Panc1 (cell line): ENCODE measurements at regions of chr10 and their contacts with region 1.

Region 1: DNA sequence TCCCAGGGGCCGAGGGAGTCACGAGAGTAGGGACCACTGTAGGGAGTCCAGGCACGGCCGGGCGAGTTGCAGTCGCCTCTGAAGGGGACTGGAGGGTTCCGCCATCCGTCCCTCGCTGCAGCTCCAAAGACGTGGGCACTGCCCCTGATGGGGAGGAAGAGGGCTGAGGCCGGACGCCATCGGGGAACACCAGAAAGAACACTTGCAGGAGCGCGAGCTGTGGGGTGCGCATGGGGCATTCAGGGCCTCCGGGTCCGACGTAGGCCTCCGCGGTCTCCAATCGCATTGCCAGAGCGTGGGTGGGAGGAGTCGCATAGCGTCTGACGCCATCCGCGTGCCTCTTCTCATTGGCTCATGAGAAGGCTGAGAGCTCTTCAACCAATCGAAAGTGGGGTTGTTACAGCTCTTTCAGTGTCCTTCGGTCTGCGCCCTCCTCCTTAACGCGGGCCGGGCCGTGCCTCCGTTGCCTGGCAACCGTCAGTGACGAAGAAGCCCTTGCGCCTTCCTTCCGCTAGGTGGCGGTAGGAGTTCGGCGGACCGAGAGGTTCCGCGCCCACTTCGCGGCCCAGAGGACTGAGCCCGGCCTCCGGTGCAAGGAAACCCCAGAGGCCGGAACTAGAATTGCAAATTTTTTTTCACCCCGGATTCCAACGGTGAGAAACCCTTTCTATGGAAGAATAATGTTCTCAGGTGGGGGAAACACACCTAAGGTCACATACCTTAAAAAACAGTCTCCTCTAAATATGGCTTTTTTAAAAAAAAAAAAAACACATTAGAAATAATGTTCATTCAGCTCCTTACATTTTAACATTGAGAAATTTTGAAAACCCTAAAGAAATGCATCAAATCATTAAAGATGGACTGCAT is at the start of gene TCTN3:
- DNase-seq: peak; percentile 97
- ATAC-seq: peak; percentile 100
- H3K4me3 ChIP-seq: peak within 1 kb of the TSS; percentile 89 to 98
- H3K27ac ChIP-seq: peak within 1 kb of the TSS; percentile 90
- H3K4me1 ChIP-seq: 0 out of 2 replicates have a peak, but pooled peaks cover 6% of the 10 kb centered on the region
- H3K27me3 ChIP-seq: no peaks in the 10 kb centered on the region
- CTCF ChIP-seq: peak; percentile 100
- total RNA-seq, gene TCTN3: 56.6 TPM

Region 2: GRCh38 chr10:94524146-94524545 is 1169.8 kb before region 1 on chr10:
- CTCF ChIA-PET with region 1: interaction called, 10 read pairs
- POLR2A ChIA-PET with region 1: no interaction called
- in situ Hi-C with region 1: no loop called
- intact Hi-C with region 1: no loop called
- DNase-seq: no peak
- ATAC-seq: no peak
- H3K4me3 ChIP-seq: no peak overlapping the region
- H3K27ac ChIP-seq: no peak overlapping the region
- H3K4me1 ChIP-seq: no peaks in the 10 kb centered on the region
- H3K27me3 ChIP-seq: no peaks in the 10 kb centered on the region
- CTCF ChIP-seq: no peak

Region 3: DNA sequence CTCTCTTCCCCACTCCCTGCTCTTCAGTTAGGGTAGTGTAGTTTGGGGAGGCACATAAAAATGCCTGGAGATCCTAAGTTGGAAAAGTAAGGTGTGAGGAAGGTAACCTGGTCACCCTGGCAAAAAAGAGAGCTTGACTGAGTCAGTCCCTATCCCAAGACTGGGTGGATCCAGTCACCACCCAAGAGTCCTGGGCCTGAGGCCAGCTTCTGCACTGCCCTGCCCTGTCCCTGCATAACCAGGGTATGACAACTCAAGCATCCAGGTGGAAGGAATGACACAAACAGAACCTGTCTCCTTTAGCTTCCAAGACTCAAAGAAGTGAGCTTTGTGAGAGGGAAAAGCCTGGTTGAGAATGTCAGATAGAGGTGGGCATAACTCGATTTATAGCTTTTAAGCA is 105.9 kb before region 1 on chr10:
- CTCF ChIA-PET with region 1: no interaction called
- POLR2A ChIA-PET with region 1: no interaction called
- in situ Hi-C with region 1: no loop called
- intact Hi-C with region 1: no loop called
- DNase-seq: no peak
- ATAC-seq: 0 out of 2 replicates have a peak, but pooled peaks have one; percentile 42
- H3K4me3 ChIP-seq: no peak overlapping the region
- H3K27ac ChIP-seq: no peak overlapping the region
- H3K4me1 ChIP-seq: no peaks in the 10 kb centered on the region
- H3K27me3 ChIP-seq: no peaks in the 10 kb centered on the region; the same call in 1 of the 2 replicates
- CTCF ChIP-seq: no peak

Region 4: DNA sequence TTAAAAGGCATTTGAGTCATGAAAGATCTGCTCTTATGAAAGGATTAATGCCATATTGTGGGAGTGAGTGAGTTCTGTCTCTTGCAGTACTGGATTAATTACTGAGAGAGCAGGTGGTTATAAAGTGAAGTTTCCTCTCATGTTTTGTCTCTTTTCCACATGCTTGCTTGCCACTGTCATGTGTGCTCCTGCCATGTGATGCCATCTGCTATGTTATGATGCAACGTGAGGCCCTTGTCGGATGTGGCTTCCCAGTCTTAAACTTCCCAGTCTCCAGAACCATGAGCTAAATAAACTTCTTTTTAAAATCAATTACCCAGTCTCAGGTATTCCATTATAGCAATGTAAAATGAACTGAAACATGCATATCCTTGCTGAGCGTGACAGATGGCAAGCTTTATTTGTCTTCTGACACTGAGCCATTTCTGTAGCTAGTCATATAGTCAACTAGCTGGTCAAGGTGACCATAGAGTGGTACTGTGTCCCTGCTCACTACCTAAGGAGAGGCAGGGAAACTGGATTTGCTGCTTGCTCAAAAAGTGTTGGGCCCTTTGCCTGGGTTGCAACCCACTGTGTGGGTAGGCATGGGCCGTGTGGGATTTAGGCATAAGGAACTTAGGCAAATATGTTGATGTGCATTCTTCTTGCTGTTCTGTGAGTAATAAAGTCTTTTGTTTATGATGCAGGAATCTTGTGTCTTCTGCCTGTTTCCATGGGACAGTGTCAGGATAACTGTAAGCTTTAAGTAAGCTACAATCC is 22.7 kb after region 1 on chr10:
- CTCF ChIA-PET with region 1: no interaction called
- POLR2A ChIA-PET with region 1: no interaction called
- in situ Hi-C with region 1: no loop called
- intact Hi-C with region 1: no loop called
- DNase-seq: no peak
- ATAC-seq: no peak
- H3K4me3 ChIP-seq: no peak overlapping the region
- H3K27ac ChIP-seq: no peak overlapping the region
- H3K4me1 ChIP-seq: no peaks in the 10 kb centered on the region
- H3K27me3 ChIP-seq: peaks cover 2% of the 10 kb centered on the region; the same call in 1 of the 2 replicates
- CTCF ChIP-seq: no peak

Region 5: DNA sequence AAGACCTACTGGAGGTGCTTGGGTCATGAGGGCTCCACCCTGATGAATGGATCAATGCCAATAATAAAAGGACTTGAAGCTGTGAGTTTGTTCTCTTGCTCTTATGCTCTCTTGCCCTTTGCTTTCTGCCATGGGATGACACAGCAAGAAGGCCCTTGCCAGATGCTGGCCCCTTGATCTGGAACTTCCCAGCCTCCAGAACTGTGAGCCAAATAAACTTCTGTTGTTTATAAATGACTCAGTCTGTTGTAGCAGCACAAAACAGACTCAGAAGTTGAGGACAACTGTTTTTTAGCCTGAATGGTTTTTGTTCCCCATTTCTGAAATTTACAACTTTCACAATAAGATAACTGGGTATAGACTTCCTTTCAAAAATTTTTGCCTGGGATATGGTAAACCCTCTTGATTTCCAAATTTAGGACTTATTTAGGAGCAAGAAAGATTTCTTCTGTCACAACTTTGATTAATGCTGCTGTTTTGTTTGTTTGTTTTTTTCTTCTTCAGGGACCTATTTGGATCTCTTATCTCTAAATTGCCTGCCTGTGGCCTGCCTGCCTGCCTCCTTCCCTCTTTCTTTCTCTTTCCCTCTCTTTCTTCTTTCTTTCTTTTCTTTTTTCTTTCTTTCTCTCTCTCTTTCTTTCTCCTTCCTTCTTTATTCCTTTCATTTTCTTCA is 74.1 kb after region 1 on chr10:
- CTCF ChIA-PET with region 1: no interaction called
- POLR2A ChIA-PET with region 1: no interaction called
- in situ Hi-C with region 1: no loop called
- intact Hi-C with region 1: no loop called
- DNase-seq: no peak
- ATAC-seq: no peak
- H3K4me3 ChIP-seq: no peak overlapping the region
- H3K27ac ChIP-seq: no peak overlapping the region
- H3K4me1 ChIP-seq: no peaks in the 10 kb centered on the region
- H3K27me3 ChIP-seq: no peaks in the 10 kb centered on the region; the same call in 1 of the 2 replicates
- CTCF ChIP-seq: no peak

Region 6: DNA sequence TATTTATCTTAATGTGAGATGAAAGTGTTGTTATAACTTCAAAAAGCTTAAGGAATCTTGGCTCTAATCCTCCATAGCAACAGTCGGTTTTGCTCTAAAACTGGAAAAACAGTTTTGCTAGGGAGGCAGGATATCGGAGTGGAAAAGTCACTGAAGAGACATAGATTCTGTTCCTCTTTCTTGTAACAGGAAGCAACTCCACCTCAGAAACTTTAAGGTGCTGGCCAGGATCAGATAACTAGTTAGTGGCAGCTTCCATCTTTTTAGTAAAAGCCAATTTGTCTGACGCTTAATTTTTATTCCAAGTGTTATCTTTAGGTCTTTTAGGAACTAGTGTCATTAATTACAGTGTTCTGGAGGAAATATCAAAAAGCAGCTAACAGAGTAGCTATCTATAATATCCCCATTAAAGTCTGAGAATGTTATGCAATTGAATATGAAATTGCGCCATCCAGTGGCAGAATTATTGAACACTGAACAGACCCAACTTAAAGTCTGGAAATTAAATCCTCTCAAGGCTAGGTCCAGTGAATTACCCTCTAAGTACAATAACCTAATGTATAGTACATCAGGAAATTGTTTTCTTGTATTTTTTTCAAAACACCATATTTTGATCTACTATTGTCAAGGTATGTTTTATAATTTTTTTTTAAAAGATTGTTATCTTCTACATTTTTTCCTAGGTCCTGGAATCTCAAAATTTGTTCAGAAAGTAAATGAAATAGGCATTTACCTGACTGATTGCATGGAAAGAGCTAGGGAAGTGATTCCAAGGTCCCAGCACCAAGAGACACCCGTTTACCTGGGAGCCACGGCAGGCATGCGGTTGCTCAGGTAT is 148.0 kb after region 1 on chr10:
- CTCF ChIA-PET with region 1: interaction called, 40 read pairs
- POLR2A ChIA-PET with region 1: no interaction called
- in situ Hi-C with region 1: no loop called
- intact Hi-C with region 1: loop called (anchors 1 kb)
- DNase-seq: no peak
- ATAC-seq: peak; percentile 81
- H3K4me3 ChIP-seq: no peak overlapping the region
- H3K27ac ChIP-seq: no peak overlapping the region
- H3K4me1 ChIP-seq: no peaks in the 10 kb centered on the region
- H3K27me3 ChIP-seq: peaks cover 13% of the 10 kb centered on the region
- CTCF ChIP-seq: peak; percentile 76; the same call in 1 of the 2 replicates

Region 7: DNA sequence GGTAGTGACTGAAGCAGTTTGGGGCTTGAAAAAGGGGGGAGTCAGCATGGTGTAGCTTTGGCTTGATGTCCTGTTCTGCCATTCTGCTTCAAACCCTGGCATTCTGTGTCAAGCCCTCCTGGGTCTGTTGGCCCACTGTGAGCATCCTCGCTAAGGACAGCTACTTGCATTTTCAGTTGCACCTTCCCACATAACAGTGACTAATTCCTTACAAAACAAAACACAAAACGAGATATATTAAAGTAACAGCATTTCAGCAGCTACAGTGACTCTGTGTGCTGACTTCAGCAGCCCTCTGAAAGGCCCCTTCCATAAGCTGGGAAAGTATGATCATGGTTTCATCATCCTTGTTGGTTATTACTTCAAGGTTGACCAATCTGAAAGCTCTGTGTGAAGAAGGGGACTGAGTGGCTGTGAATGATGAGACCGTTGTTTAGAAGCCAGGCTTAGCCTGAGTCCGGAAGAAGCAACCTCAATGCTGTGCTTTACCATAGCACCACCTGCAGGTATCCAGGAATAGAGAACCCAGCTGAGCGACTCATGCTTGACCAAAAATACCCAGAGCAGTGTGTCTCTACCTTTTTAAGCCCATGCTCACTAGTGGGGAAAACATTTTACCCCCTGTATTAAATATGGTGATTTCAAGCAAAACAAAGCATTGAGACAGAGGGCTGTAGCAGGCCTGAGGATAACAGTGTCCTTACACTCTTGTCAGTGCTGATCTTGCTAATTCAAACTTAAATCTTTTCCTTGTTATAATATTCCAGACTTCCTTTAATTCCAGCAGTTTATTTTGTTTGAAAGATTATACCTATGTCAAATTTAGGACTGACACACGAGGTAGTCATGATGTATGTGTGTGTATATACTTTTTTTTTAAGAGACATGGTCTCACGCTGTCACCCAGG is 171.3 kb after region 1 on chr10:
- CTCF ChIA-PET with region 1: interaction called, 40 read pairs
- POLR2A ChIA-PET with region 1: no interaction called
- in situ Hi-C with region 1: no loop called
- intact Hi-C with region 1: no loop called
- DNase-seq: peak; percentile 46
- ATAC-seq: peak; percentile 94
- H3K4me3 ChIP-seq: no peak overlapping the region
- H3K27ac ChIP-seq: no peak overlapping the region
- H3K4me1 ChIP-seq: no peaks in the 10 kb centered on the region
- H3K27me3 ChIP-seq: no peaks in the 10 kb centered on the region
- CTCF ChIP-seq: peak; percentile 92

Region 8: GRCh38 chr10:95987685-95988426 is 294.0 kb after region 1 on chr10:
- CTCF ChIA-PET with region 1: no interaction called
- POLR2A ChIA-PET with region 1: no interaction called
- in situ Hi-C with region 1: no loop called
- intact Hi-C with region 1: loop called (anchors 2 kb)
- DNase-seq: no peak
- ATAC-seq: no peak
- H3K4me3 ChIP-seq: no peak overlapping the region
- H3K27ac ChIP-seq: no peak overlapping the region
- H3K4me1 ChIP-seq: no peaks in the 10 kb centered on the region
- H3K27me3 ChIP-seq: peaks cover 31% of the 10 kb centered on the region
- CTCF ChIP-seq: no peak

Region 9: GRCh38 chr10:96368971-96369370 is 675.1 kb after region 1 on chr10:
- CTCF ChIA-PET with region 1: interaction called, 11 read pairs
- POLR2A ChIA-PET with region 1: no interaction called
- in situ Hi-C with region 1: no loop called
- intact Hi-C with region 1: no loop called
- DNase-seq: no peak
- ATAC-seq: no peak
- H3K4me3 ChIP-seq: no peak overlapping the region
- H3K27ac ChIP-seq: no peak overlapping the region
- H3K4me1 ChIP-seq: peaks cover 19% of the 10 kb centered on the region
- H3K27me3 ChIP-seq: no peaks in the 10 kb centered on the region
- CTCF ChIP-seq: no peak

Region 10: GRCh38 chr10:97648562-97649404 is 1954.9 kb after region 1 on chr10:
- CTCF ChIA-PET with region 1: no interaction called
- POLR2A ChIA-PET with region 1: no interaction called
- in situ Hi-C with region 1: no loop called
- intact Hi-C with region 1: no loop called
- DNase-seq: peak; percentile 76
- ATAC-seq: peak; percentile 81
- H3K4me3 ChIP-seq: no peak overlapping the region
- H3K27ac ChIP-seq: peak overlapping the region; percentile 10; the same call in 1 of the 2 replicates
- H3K4me1 ChIP-seq: peaks cover 8% of the 10 kb centered on the region
- H3K27me3 ChIP-seq: no peaks in the 10 kb centered on the region
- CTCF ChIP-seq: no peak